PC-3 (cell line): ENCODE measurements at regions of chr15 and their contacts with region 1.

Region 1: GRCh38 chr15:43133430-43134156 is at the start of gene TMEM62:
- DNase-seq: peak; percentile 86
- ATAC-seq: peak; percentile 88
- H3K4me3 ChIP-seq: peak within 1 kb of the TSS; percentile 86
- H3K27ac ChIP-seq: peak within 1 kb of the TSS; percentile 24
- H3K4me1 ChIP-seq: peaks cover 23% of the 10 kb centered on the region
- H3K27me3 ChIP-seq: no peaks in the 10 kb centered on the region
- CTCF ChIP-seq: no peak; the same call in 1 of the 2 replicates
- total RNA-seq, gene TMEM62: 19.6 and 31.6 TPM in 2 replicates

Region 2: DNA sequence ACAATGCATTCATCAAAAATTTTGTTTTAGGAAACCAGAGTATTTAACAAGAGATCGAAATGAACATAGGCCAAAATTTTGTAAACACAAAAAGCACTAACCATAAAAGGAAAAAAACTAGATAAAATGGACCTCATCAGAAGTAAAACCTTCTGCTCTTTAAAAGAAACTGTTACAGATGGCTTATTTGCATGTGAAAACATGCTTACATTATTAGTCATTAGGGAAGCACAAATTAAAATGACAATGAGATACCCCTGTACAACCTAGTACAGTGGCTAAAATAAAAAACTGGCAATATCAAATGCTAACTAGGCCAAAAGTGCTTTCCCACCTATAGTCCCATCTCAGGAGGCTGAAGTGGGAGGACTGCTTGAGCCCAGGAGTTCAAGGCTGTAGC is 47.0 kb before region 1 on chr15:
- CTCF ChIA-PET with region 1: no interaction called
- POLR2A ChIA-PET with region 1: interaction called, 10 read pairs
- intact Hi-C with region 1: no loop called
- DNase-seq: no peak
- ATAC-seq: peak; percentile 63
- H3K4me3 ChIP-seq: no peak overlapping the region
- H3K27ac ChIP-seq: no peak overlapping the region
- H3K4me1 ChIP-seq: no peaks in the 10 kb centered on the region
- H3K27me3 ChIP-seq: no peaks in the 10 kb centered on the region
- CTCF ChIP-seq: no peak